Sigmoid colon (tissue), 7 donors: ENCODE measurements at regions of chr1 and their contacts with region 1.

Region 1: DNA sequence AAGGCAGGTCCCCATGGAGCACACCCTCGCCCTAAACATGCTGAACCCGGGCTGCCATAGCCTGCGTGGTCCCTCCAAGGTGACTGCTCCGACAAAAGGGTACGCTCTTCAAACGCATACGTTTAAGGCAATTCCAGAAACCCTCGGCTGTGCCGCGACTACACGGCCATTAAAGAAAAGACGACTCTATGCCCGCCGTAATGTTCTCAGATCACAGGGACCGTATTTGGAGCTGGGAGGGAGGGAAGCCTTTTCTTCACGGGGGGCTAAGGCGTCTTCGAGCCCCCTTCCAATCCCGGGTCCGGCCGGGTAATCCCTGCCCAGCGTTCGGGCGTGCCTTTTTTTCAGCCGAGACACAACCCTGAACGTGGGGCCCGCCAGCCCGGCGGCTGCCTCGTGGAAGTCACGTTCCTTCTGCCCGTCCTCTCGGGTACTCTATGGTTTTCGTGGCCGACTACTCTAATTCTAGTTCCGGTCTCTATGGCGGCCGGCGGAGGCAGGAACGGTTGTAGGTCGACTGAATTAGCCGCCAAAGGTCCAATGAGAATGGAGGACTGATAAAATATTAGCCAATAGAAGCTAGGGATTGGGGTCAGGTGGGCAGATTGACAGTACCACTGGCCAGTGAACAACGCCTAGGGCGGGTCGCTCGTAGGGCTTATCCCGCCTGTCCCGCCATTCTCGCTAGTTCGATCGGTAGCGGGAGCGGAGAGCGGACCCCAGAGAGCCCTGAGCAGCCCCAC is at the start of gene YBX1:
- DNase-seq: peak; percentile 99
- H3K4me3 ChIP-seq: peak within 1 kb of the TSS; percentile 78 to 96 (median 93)
- H3K27ac ChIP-seq: peak within 1 kb of the TSS; percentile 92 to 99 (median 96)
- H3K4me1 ChIP-seq: peaks cover 0 to 54% (median 48%) of the 10 kb centered on the region in 4 donors
- H3K27me3 ChIP-seq: no peaks in the 10 kb centered on the region
- CTCF ChIP-seq: no peak
- EP300 ChIP-seq: no peak
- POLR2A ChIP-seq: peak; percentile 84 to 85
- total RNA-seq, gene YBX1: 685 to 773 (median 728) TPM

Region 2: DNA sequence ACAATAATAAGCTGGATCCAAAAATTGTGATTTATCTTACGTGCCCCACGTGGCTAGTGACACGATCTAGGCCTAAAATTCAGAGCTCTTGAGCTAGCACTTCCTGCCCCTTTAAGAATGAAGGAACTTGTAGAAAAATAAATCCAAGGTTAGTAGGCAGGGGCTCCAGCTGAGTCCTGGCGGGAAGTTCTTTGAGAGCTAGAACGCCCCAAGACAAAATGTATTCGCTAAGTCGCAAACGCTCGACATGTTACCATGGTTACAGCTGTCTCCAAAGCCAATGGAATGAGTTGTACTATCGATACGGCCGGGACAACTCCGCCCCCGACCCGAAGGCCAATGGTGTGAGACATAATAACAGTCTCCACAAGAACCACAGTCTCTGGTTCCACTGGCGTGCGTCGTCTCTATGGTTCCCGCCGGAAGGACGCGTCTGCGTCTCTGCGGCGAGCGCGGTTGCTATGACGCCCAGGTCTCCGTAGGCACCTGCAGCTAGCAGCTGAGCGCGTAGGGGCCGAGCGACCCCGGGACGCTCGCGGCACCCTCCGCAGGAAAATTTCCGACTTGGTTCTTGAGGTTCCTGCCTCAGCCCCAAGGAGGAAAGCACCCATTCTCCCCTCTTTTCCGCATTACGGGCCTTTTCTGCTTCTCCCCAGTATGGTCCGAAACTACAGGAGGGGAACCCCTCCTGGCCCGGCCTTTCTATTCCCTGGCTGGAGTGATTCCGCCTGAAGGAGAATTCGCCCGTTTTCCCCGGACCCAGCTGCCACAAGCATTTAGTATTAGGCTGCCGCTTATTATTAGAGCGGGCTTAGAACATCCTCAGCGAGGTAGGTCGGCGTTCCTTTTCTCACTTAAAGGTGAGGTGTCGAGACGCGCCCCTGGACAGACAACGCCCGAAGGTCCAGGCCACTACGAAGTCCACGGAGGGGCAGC is 218.8 kb before region 1 on chr1 and contains the start of gene CCDC30:
- intact Hi-C with region 1: loop called (anchors 5 kb)
- DNase-seq: peak; percentile 98
- H3K4me3 ChIP-seq: peak within 1 kb of the TSS; percentile 41 to 86 (median 72)
- H3K27ac ChIP-seq: peak within 1 kb of the TSS; percentile 47 to 67 (median 54)
- H3K4me1 ChIP-seq: peaks cover 0 to 18% (median 18%) of the 10 kb centered on the region in 4 donors
- H3K27me3 ChIP-seq: no peaks in the 10 kb centered on the region
- CTCF ChIP-seq: no peak
- EP300 ChIP-seq: no peak
- POLR2A ChIP-seq: no peak
- total RNA-seq, gene CCDC30: 3.3 to 3.9 (median 3.8) TPM

Region 3: DNA sequence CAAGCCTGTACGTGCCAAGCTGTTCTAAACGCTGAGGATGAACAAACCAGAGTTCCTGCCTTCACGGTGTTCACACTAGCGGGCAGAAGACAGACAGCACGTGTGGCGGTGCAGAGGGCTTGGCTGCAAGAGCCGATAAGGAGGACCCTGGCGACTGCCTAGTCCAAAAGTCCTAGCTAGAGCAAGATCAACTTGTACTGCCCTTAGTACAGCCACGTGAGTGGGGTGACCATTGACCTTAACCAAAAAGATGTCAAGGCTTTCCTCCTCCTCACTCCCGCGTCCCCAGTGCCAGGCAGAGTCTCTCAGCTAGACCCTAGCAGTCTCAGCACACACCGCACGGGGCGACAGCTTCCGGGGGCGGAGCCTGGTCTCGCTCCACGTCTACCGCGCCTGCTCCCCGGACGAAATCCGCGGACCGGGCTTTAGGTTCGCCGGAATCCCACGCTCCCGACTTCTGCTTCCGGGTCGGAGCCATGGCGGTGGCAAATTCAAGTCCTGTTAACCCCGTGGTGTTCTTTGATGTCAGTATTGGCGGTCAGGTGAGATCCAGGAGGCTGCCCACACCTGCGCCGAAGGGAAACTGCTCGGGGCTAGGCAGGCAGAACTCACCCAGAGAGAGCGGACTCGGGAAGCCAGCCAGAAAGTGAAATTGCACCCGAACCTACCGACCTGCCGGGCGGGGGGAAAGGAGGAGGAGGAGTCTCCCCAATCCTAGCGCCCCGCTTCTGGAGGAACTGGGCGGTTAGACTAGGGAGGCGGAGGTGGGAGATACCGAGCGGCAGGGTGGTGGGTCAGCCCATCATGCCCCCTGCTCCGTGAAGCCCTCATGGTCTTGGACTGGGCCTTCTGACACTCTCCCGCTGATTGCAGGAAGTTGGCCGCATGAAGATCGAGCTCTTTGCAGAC is 23.7 kb before region 1 on chr1 and contains the start of gene PPIH:
- intact Hi-C with region 1: loop called (anchors 2 kb)
- DNase-seq: peak; percentile 96
- H3K4me3 ChIP-seq: peak within 1 kb of the TSS; percentile 63 to 91 (median 74)
- H3K27ac ChIP-seq: peak within 1 kb of the TSS; percentile 69 to 84 (median 82)
- H3K4me1 ChIP-seq: peaks cover 0 to 20% (median 16%) of the 10 kb centered on the region in 4 donors
- H3K27me3 ChIP-seq: no peaks in the 10 kb centered on the region
- CTCF ChIP-seq: peak; percentile 9 to 55 (median 36)
- EP300 ChIP-seq: peak in 1 of 4 donors; percentile 48
- POLR2A ChIP-seq: peak in 1 of 2 donors; percentile 46
- total RNA-seq, gene PPIH: 19.7 to 32.9 (median 27.5) TPM